ENCODE measurements at regions of chr16 and their contacts with region 1.

Region 1: GRCh38 chr16:72066747-72067146 is 3.7 kb downstream of the HPR start:
- DNase-seq: peak; percentile 47
- H3K4me3 ChIP-seq: no peak overlapping the region
- H3K27ac ChIP-seq: no peak overlapping the region
- H3K4me1 ChIP-seq: no peaks in the 10 kb centered on the region
- CTCF ChIP-seq: peak; percentile 83

Region 2: DNA sequence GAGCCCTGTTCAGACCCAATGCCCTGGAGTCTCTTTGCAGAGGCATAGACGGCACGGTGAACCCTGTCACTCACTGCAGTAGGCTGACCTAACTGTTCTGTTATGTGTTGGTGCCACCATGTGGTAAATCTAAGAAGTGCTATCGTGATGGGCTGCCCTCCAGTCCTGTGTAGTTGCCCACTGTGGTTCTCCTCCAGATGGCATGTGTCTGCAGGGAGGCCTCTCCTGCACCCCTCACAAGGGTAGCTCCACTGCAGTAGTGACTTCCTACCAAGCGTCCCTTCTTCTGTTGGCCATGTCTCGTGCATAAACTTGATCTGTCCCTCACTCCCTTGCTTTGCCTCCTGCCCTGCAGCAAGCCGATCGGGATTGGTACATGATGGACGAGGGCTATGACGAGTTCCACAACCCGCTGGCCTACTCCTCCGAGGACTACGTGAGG is 32.7 kb after region 1 on chr16:
- CTCF ChIA-PET with region 1: no interaction called
- POLR2A ChIA-PET with region 1: no interaction called
- intact Hi-C with region 1: loop called (anchors 2 kb)
- DNase-seq: peak; percentile 67
- H3K4me3 ChIP-seq: no peak overlapping the region
- H3K27ac ChIP-seq: no peak overlapping the region
- H3K4me1 ChIP-seq: peaks cover 21% of the 10 kb centered on the region
- CTCF ChIP-seq: peak; percentile 78

Region 3: DNA sequence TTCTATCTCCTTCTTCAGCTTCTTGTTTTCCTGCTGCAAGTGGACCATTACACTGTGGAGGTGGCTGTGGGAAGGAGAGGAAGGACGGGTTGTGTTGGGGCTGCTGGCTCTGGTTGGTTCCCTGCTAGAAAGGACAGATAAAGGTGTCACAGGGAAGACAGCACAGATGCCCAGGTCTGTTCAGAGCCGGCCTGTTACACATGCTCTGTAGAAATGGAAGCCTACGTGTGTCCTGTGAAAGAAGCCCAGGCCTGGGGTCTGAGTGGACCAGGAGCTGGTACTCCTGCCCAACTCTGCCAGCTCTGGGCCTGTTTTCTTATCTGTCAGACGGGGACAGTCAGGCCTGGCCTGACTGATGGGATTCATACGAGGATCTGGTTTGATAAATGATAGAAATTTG is 53.3 kb after region 1 on chr16:
- CTCF ChIA-PET with region 1: no interaction called
- POLR2A ChIA-PET with region 1: no interaction called
- intact Hi-C with region 1: no loop called
- DNase-seq: no peak
- H3K4me3 ChIP-seq: no peak overlapping the region
- H3K27ac ChIP-seq: no peak overlapping the region
- H3K4me1 ChIP-seq: no peaks in the 10 kb centered on the region
- CTCF ChIP-seq: no peak